Endothelial cell of umbilical vein (primary cell): ENCODE measurements at regions of chr1 and their contacts with region 1.

Region 1: GRCh38 chr1:87131809-87132283 is 196.8 kb upstream of the LMO4 start:
- DNase-seq: peak; percentile 70
- H3K4me3 ChIP-seq: peak overlapping the region in 2 of 3 experiments; percentile 16 to 37
- H3K27ac ChIP-seq: no peak overlapping the region
- H3K4me1 ChIP-seq: peaks cover 2% of the 10 kb centered on the region
- H3K27me3 ChIP-seq: peaks cover 0 to 13% of the 10 kb centered on the region in 2 experiments
- CTCF ChIP-seq: peak; percentile 94 to 96
- POLR2A ChIP-seq: no peak

Region 2: GRCh38 chr1:87279966-87280535 is 148.2 kb after region 1 on chr1:
- CTCF ChIA-PET with region 1: no interaction called
- POLR2A ChIA-PET with region 1: no interaction called
- dilution Hi-C with region 1: no loop called
- intact Hi-C with region 1: loop called (anchors 5 kb)
- DNase-seq: no peak
- H3K4me3 ChIP-seq: no peak overlapping the region
- H3K27ac ChIP-seq: no peak overlapping the region
- H3K4me1 ChIP-seq: no peaks in the 10 kb centered on the region
- H3K27me3 ChIP-seq: peaks cover 0 to 2% of the 10 kb centered on the region in 2 experiments
- CTCF ChIP-seq: no peak
- POLR2A ChIP-seq: no peak

Region 3: DNA sequence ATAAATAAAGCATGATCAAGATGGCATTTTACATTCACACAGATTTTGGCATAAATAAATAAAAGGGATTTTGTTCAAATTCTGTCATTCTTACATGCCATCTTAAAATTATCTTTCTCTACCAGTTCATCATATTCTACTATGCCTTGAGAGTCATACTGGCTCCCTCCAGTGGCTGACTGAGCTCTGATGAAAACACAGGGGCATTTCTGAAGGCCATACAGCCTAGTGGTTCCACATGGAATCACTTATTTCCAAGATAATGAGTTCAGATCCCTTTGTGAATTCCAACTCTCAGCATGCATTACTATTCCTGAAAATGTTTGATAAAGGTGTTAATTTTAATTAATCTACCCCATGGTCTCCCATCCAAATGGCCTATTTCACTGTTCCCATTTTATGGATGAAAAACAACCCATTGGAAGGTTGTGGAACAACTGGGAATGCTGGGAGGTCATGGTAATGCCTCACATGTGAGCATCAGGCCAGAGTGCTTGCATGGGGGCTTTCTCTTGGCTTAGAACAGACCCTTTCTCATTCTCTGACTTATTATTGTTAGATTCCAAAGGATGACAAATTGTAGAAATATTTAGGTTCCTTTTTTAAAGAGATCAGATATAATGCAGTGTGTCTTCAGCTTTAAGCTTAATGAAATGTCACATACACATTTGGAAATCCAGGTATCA is 929.8 kb after region 1 on chr1:
- CTCF ChIA-PET with region 1: no interaction called
- POLR2A ChIA-PET with region 1: no interaction called
- dilution Hi-C with region 1: no loop called
- intact Hi-C with region 1: loop called (anchors 1 kb)
- DNase-seq: peak; percentile 59
- H3K4me3 ChIP-seq: no peak overlapping the region
- H3K27ac ChIP-seq: no peak overlapping the region
- H3K4me1 ChIP-seq: peaks cover 6% of the 10 kb centered on the region
- H3K27me3 ChIP-seq: no peaks in the 10 kb centered on the region
- CTCF ChIP-seq: peak; percentile 65 to 67
- POLR2A ChIP-seq: no peak

Region 4: DNA sequence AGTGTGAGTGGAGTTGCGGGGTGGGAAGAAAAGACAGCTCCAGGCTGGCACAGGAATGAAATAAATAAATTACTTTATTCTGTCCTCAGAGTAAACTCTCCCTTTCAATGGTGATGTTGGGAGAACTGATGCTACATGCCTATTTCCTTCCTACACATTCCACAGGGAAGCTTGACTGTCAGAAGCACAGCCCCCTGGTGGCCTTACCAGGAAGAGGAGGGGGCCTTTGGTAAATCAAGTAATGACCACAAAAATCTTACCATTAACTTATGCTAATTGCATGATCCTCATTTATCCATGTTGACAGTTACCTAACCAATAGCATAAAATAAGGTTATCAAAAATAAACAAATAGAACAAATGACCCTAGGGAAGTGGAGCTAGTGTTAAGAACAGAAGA is 947.2 kb after region 1 on chr1:
- CTCF ChIA-PET with region 1: no interaction called
- POLR2A ChIA-PET with region 1: no interaction called
- dilution Hi-C with region 1: no loop called
- intact Hi-C with region 1: loop called (anchors 5 kb)
- DNase-seq: peak; percentile 8
- H3K4me3 ChIP-seq: no peak overlapping the region
- H3K27ac ChIP-seq: no peak overlapping the region
- H3K4me1 ChIP-seq: no peaks in the 10 kb centered on the region
- H3K27me3 ChIP-seq: peaks cover 0 to 1% of the 10 kb centered on the region in 2 experiments
- CTCF ChIP-seq: peak; percentile 39 to 44
- POLR2A ChIP-seq: no peak

Region 5: GRCh38 chr1:88302843-88303486 is 1171.1 kb after region 1 on chr1:
- CTCF ChIA-PET with region 1: no interaction called
- POLR2A ChIA-PET with region 1: no interaction called
- dilution Hi-C with region 1: no loop called
- intact Hi-C with region 1: loop called (anchors 2 kb)
- DNase-seq: peak; percentile 53
- H3K4me3 ChIP-seq: no peak overlapping the region
- H3K27ac ChIP-seq: no peak overlapping the region
- H3K4me1 ChIP-seq: no peaks in the 10 kb centered on the region
- H3K27me3 ChIP-seq: peaks cover 4 to 13% of the 10 kb centered on the region in 2 experiments
- CTCF ChIP-seq: peak; percentile 11 to 14
- POLR2A ChIP-seq: no peak